Naive thymus-derived CD4-positive, alpha-beta T cell (primary cell): ENCODE measurements at regions of chr7 and their contacts with region 1.

Region 1: GRCh38 chr7:37698276-37698675 is 14.7 kb downstream of the GPR141 start:
- DNase-seq: no peak
- ATAC-seq: no peak
- H3K4me3 ChIP-seq: no peak overlapping the region
- H3K4me3 Mint-ChIP-seq: no peak overlapping the region
- H3K27ac ChIP-seq: no peak overlapping the region
- H3K27ac Mint-ChIP-seq: no peak overlapping the region
- H3K4me1 ChIP-seq: no peaks in the 10 kb centered on the region
- H3K4me1 Mint-ChIP-seq: peaks cover 0 to 15% (median 0%) of the 10 kb centered on the region in 7 donors
- H3K27me3 ChIP-seq: no peaks in the 10 kb centered on the region
- H3K27me3 Mint-ChIP-seq: peaks cover 0 to 23% (median 5%) of the 10 kb centered on the region in 5 donors

Region 2: DNA sequence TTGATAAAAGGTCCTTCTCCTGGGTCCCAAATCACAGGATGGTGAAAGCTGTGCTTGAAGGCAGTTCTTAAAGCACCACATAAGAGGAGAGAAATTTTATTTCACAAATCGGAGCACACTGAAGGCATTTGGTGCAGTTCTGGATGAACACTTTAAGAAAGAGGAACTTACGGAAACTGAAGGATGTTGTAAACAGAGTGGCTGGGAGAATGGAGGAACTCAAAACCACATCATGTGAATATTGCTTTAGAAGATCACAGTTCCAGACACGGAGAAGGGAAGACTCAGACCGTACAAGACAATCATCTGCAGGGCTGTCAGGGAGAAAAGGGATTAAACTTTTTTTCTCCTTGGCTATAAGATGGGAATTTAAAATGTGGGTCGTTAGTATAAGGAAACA is 23.7 kb before region 1 on chr7:
- CTCF ChIA-PET with region 1: no interaction called
- POLR2A ChIA-PET with region 1: no interaction called
- intact Hi-C with region 1: loop called in 1 of 2 experiments (anchors 1 kb)
- DNase-seq: no peak
- ATAC-seq: peak; percentile 87
- H3K4me3 ChIP-seq: no peak overlapping the region
- H3K4me3 Mint-ChIP-seq: no peak overlapping the region
- H3K27ac ChIP-seq: no peak overlapping the region
- H3K27ac Mint-ChIP-seq: no peak overlapping the region
- H3K4me1 ChIP-seq: no peaks in the 10 kb centered on the region
- H3K4me1 Mint-ChIP-seq: no peaks in the 10 kb centered on the region
- H3K27me3 ChIP-seq: no peaks in the 10 kb centered on the region
- H3K27me3 Mint-ChIP-seq: peaks cover 0 to 34% (median 7%) of the 10 kb centered on the region in 5 donors